HCT116 (cell line): ENCODE measurements at regions of chr15 and their contacts with region 1.

Region 1: GRCh38 chr15:75367913-75368688 is at the start of gene MAN2C1:
- DNase-seq: peak; percentile 97
- ATAC-seq: peak; percentile 94
- H3K4me3 ChIP-seq: peak within 1 kb of the TSS; percentile 68 to 84
- H3K27ac ChIP-seq: peak within 1 kb of the TSS; percentile 95
- H3K4me1 ChIP-seq: peaks cover 11 to 23% of the 10 kb centered on the region in 2 experiments
- H3K27me3 ChIP-seq: no peaks in the 10 kb centered on the region
- CTCF ChIP-seq: peak; percentile 77 to 95 (median 88)
- POLR2A ChIP-seq: peak; percentile 92
- RAD21 ChIP-seq: peak; percentile 89
- total RNA-seq, gene MAN2C1: 118 TPM

Region 2: DNA sequence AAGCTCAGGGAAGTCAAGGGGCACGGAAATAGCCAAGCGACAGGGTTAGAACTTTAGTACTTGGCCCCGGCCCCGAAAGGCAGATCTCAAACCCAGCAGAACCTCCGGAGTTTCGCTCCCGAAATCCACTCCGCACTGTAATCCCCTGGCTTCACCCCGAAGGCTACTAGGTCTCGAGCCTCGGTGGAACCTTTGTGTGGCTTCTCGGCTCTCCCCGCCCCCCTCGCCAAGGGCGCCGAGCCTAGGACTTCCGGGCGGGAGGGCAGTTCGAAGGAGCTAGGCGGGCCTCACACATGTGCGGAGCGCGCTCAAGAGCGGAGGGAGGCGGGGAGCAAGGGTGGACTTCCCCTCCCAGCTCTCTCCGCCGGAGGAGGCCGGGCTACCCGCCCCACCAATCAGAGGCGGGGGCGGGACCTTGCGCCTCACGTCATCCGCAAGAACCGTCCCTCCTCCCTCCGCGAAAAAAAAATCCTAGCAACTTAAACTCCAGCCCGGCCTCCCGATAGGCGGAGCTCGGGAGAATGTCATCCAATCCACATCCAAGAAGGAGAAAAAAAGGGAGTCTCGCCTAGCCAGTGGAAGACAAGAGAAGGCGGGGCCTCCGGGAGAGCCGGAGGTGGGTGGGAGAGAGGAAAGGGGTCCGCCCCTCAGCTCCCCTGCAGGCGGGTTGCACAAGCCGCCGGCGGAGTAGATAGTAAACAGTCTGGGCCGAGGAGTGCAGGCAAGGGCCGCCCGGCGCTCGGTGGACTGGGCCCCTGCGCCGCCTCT is 85.8 kb after region 1 on chr15:
- CTCF ChIA-PET with region 1: interaction called, 34 read pairs
- POLR2A ChIA-PET with region 1: interaction called, 39 read pairs
- RAD21 ChIA-PET with region 1: interaction called, 5 to 9 read pairs
- intact Hi-C with region 1: no loop called
- DNase-seq: peak; percentile 100
- ATAC-seq: peak; percentile 41
- H3K4me3 ChIP-seq: peak overlapping the region; percentile 92 to 97
- H3K27ac ChIP-seq: peak overlapping the region; percentile 89
- H3K4me1 ChIP-seq: peaks cover 6 to 40% of the 10 kb centered on the region in 2 experiments
- H3K27me3 ChIP-seq: no peaks in the 10 kb centered on the region
- CTCF ChIP-seq: no peak
- POLR2A ChIP-seq: peak; percentile 35
- RAD21 ChIP-seq: no peak

Region 3: GRCh38 chr15:75639709-75640482 is 271.8 kb after region 1 on chr15 and contains the start of gene IMP3:
- CTCF ChIA-PET with region 1: interaction called, 21 read pairs
- POLR2A ChIA-PET with region 1: interaction called, 10 read pairs
- RAD21 ChIA-PET with region 1: interaction called in 1 of 2 experiments, 8 read pairs
- intact Hi-C with region 1: loop called (anchors 1 kb)
- DNase-seq: peak; percentile 95
- ATAC-seq: peak; percentile 90
- H3K4me3 ChIP-seq: peak within 1 kb of the TSS; percentile 95 to 97
- H3K27ac ChIP-seq: peak within 1 kb of the TSS; percentile 97
- H3K4me1 ChIP-seq: peaks cover 12 to 53% of the 10 kb centered on the region in 2 experiments
- H3K27me3 ChIP-seq: no peaks in the 10 kb centered on the region
- CTCF ChIP-seq: no peak
- POLR2A ChIP-seq: peak; percentile 97
- RAD21 ChIP-seq: no peak
- total RNA-seq, gene IMP3: 79.9 TPM

Region 4: DNA sequence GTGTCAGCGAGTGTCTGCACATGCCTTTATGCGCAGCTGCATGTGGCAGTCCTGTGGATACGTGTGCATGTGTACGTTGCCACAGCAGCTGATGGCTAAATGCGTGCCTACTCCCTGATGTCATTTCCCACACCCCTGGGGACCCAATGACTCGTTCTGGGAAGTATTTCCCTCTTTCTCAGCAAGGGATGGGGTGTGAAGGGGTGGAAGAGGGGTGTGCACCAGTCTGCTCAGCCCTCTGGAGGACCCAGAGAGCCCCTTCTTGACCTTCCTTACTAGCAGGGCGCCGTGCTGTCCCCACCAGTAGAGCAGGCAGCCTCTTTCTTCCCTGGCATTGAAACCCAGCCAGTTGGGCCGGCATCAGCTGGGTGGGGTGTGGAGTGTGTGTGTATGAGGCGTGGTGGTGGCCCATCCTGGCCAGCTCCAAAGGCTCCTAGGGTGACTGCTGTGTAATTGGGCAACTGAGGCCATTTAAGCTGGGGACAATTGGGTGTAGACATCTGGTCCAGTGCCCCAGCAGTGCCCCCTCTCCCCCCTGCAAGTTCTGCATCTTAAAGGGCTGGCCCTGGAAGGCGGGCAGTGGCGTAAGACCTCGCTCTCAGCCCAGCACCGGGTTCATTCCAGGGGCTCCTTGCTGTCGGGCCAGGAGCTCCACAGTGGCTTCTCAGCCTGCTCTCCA is 298.9 kb after region 1 on chr15:
- CTCF ChIA-PET with region 1: interaction called, 5 read pairs
- POLR2A ChIA-PET with region 1: interaction called, 7 read pairs
- RAD21 ChIA-PET with region 1: interaction called in 1 of 2 experiments, 3 read pairs
- intact Hi-C with region 1: loop called (anchors 5 kb)
- DNase-seq: peak; percentile 91
- ATAC-seq: peak; percentile 62
- H3K4me3 ChIP-seq: peak overlapping the region in 1 of 2 experiments; percentile 13; a peak in 1 of 4 replicates
- H3K27ac ChIP-seq: peak overlapping the region; percentile 53
- H3K4me1 ChIP-seq: peaks cover 53 to 85% of the 10 kb centered on the region in 2 experiments
- H3K27me3 ChIP-seq: no peaks in the 10 kb centered on the region
- CTCF ChIP-seq: no peak
- POLR2A ChIP-seq: no peak
- RAD21 ChIP-seq: no peak

Region 5: GRCh38 chr15:75801859-75802593 is 433.9 kb after region 1 on chr15:
- CTCF ChIA-PET with region 1: interaction called, 6 read pairs
- POLR2A ChIA-PET with region 1: no interaction called
- RAD21 ChIA-PET with region 1: interaction called in 1 of 2 experiments, 7 read pairs
- intact Hi-C with region 1: loop called (anchors 1 kb)
- DNase-seq: peak; percentile 64
- ATAC-seq: peak; percentile 100
- H3K4me3 ChIP-seq: peak overlapping the region; percentile 22 to 48
- H3K27ac ChIP-seq: no peak overlapping the region
- H3K4me1 ChIP-seq: peaks cover 3 to 11% of the 10 kb centered on the region in 2 experiments; a peak in 2 of 4 replicates
- H3K27me3 ChIP-seq: no peaks in the 10 kb centered on the region; the same call in 1 of the 2 replicates
- CTCF ChIP-seq: peak; percentile 73 to 76 (median 75); a peak in 5 of 6 replicates
- POLR2A ChIP-seq: no peak
- RAD21 ChIP-seq: peak; percentile 90